PC-9 (cell line): ENCODE measurements at regions of chr15 and their contacts with region 1.

Region 1: DNA sequence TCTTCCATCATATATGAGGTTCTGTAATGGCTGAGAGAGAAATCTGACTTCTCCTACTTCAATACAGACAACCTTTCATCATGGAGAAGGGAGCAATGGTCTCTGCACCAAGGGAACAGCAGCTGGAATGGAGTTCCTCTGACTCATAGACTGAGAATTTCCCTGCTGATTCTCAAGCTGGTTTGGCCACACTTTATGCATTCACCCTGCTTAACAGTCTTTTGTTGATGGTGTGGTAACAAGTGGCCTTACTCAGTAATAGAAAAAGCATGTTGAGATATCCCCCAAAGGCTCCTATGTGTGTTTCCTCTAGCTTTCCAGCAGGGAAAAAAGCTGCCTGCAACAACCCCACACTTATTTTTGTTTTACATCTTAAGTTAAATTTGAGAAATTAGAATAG is 138.1 kb downstream of the GREM1 start:
- DNase-seq: peak; percentile 57 to 91
- H3K4me3 ChIP-seq: no peak overlapping the region
- H3K27ac ChIP-seq: peak overlapping the region; percentile 82
- H3K4me1 ChIP-seq: peaks cover 52% of the 10 kb centered on the region
- H3K27me3 ChIP-seq: no peaks in the 10 kb centered on the region
- CTCF ChIP-seq: no peak

Region 2: GRCh38 chr15:32669896-32670619 is 185.9 kb before region 1 on chr15:
- CTCF ChIA-PET with region 1: no interaction called
- POLR2A ChIA-PET with region 1: no interaction called
- intact Hi-C with region 1: no loop called
- DNase-seq: peak; percentile 41 to 62
- H3K4me3 ChIP-seq: no peak overlapping the region
- H3K27ac ChIP-seq: no peak overlapping the region
- H3K4me1 ChIP-seq: peaks cover 14% of the 10 kb centered on the region
- H3K27me3 ChIP-seq: no peaks in the 10 kb centered on the region
- CTCF ChIP-seq: no peak

Region 3: GRCh38 chr15:32750979-32751378 is 105.0 kb before region 1 on chr15:
- CTCF ChIA-PET with region 1: no interaction called
- POLR2A ChIA-PET with region 1: no interaction called
- intact Hi-C with region 1: no loop called
- DNase-seq: no peak
- H3K4me3 ChIP-seq: no peak overlapping the region
- H3K27ac ChIP-seq: no peak overlapping the region
- H3K4me1 ChIP-seq: no peaks in the 10 kb centered on the region
- H3K27me3 ChIP-seq: no peaks in the 10 kb centered on the region
- CTCF ChIP-seq: no peak

Region 4: GRCh38 chr15:32867313-32867626 is 11.3 kb after region 1 on chr15:
- CTCF ChIA-PET with region 1: interaction called, 3 read pairs
- POLR2A ChIA-PET with region 1: interaction called, 6 read pairs
- intact Hi-C with region 1: loop called (anchors 1 kb)
- DNase-seq: peak; percentile 37 to 47
- H3K4me3 ChIP-seq: no peak overlapping the region
- H3K27ac ChIP-seq: peak overlapping the region; percentile 31; the same call in 1 of the 2 replicates
- H3K4me1 ChIP-seq: peaks cover 11% of the 10 kb centered on the region
- H3K27me3 ChIP-seq: no peaks in the 10 kb centered on the region
- CTCF ChIP-seq: no peak

Region 5: DNA sequence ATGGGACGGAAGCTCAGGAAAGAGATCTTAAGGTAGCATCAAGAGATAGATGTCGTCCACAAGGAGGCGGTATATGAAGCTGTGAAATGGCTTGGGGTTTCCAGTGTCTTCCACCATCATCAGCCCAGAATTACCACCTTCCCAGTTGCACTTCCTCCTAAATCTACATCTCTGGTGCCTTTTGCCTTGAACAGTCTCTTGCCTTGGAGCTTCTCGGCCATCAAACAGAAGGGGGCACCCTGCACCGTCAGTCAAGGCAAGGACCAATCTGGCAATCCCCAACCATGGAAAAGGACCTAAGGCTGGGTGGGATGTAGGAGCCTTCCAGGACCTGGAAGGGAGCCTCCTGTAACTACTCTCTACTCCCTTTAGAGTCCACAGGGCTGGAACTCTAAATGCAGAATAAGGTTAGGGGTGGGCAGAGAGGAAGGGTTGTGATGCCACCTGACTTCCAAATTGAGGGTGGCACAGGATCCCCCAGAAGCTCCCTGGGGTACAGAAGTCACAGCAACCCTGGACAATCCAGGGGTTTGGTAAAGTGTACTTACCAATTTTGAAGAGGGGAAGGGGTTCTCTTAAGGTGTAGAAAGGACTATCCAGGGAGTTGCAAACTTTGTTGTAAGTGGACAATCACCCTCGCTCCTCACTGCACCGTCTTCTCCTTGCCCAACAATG is 453.8 kb after region 1 on chr15:
- CTCF ChIA-PET with region 1: no interaction called
- POLR2A ChIA-PET with region 1: no interaction called
- intact Hi-C with region 1: no loop called
- DNase-seq: no peak
- H3K4me3 ChIP-seq: no peak overlapping the region
- H3K27ac ChIP-seq: no peak overlapping the region
- H3K4me1 ChIP-seq: peaks cover 13% of the 10 kb centered on the region; the same call in 1 of the 2 replicates
- H3K27me3 ChIP-seq: no peaks in the 10 kb centered on the region
- CTCF ChIP-seq: no peak